A549 (cell line): ENCODE measurements at regions of chr12 and their contacts with region 1.

Region 1: DNA sequence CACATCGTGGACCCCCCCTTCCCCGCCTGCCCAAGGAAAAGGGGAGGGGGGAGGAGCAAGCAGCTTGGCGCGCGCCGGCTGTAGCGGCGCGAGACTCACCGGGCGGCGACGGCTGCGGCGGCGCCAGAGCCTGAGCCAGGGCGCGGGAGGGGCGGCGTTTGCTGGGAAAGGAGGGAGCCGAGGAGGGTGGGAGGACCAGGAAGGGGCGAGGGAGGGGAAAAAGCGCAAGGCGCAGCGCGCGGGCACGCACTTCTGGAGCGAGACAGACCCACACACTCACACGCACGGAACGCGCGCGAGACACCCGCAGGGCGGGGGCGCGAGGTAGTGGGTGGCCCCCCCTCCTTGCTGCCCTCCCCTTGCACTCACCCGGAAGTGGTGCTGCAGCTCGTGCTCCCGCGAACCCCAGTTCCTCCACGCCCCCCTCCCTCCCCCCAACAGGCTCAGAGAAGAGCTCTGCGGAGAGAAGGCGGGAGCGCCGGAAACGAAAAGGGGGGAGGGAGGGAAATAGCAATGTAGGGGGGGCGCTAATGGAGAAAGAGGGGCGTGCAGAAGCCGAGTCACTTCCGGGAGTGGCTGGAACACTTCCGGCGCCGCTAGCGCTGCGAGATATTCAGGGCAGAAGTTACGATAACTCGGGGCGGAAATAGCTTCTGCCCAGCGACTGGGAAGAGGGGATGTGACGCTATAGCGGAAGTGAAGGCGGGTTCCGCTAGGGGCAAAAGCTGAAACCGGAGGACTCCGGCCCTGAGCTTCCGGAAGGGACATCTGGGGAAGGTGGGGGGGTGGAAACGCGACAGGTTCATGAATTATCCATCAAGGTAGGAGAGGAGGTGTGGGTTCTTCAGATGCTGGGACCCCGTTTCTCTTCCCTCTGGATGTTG is at the start of gene ZNF384:
- DNase-seq: peak; percentile 100
- ATAC-seq: peak; percentile 91 to 92
- H3K4me3 ChIP-seq: peak within 1 kb of the TSS; percentile 94
- H3K27ac ChIP-seq: peak within 1 kb of the TSS; percentile 98 to 100
- H3K4me1 ChIP-seq: peaks cover 18% of the 10 kb centered on the region; the same call in 2 of the 3 replicates
- CTCF ChIP-seq: no peak
- EP300 ChIP-seq: no peak
- POLR2A ChIP-seq: peak; percentile 59
- RAD21 ChIP-seq: 0 out of 5 replicates have a peak, but pooled peaks of 1 of the 2 experiments have one; percentile 13
- polyA plus RNA-seq, gene ZNF384: 59.6 and 81.9 TPM in 2 replicates

Region 2: DNA sequence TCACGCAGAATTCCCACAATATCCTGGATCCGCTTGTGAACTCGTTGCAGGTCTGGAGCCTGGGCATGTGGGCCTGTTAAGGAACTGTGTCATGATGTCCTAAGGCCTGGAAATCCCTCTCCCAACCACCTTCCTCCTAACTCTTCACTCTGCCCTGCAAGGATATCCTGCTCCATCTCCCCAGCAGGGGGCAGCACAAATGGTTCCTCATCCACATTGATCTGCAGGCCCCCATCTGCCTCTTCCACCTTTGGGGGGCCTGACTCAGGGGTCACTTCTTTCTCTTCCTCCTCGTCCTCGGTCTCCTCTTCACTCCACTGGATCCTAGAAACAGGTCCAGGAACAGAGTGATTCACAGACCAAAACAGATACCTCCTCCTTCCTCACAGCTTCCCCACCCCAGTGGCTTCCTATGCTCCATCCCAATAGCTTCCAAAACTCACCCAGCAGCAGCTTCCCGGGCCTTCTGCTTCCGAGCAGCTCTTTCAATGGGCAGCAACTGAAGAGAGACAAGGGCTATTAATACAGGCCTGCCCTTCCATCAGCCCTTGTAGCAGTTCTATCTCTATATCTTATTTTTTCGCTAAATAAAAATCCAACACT is 125.7 kb before region 1 on chr12:
- CTCF ChIA-PET with region 1: interaction called, 4 read pairs
- POLR2A ChIA-PET with region 1: interaction called, 22 read pairs
- DNase-seq: peak; percentile 65 to 69
- ATAC-seq: peak; percentile 55 to 64; a peak in 4 of 6 replicates
- H3K4me3 ChIP-seq: no peak overlapping the region
- H3K27ac ChIP-seq: no peak overlapping the region
- H3K4me1 ChIP-seq: peaks cover 6% of the 10 kb centered on the region; the same call in 2 of the 3 replicates
- CTCF ChIP-seq: peak; percentile 80
- EP300 ChIP-seq: no peak
- POLR2A ChIP-seq: no peak
- RAD21 ChIP-seq: peak; percentile 20 to 33; a peak in 1 of 5 replicates

Region 3: DNA sequence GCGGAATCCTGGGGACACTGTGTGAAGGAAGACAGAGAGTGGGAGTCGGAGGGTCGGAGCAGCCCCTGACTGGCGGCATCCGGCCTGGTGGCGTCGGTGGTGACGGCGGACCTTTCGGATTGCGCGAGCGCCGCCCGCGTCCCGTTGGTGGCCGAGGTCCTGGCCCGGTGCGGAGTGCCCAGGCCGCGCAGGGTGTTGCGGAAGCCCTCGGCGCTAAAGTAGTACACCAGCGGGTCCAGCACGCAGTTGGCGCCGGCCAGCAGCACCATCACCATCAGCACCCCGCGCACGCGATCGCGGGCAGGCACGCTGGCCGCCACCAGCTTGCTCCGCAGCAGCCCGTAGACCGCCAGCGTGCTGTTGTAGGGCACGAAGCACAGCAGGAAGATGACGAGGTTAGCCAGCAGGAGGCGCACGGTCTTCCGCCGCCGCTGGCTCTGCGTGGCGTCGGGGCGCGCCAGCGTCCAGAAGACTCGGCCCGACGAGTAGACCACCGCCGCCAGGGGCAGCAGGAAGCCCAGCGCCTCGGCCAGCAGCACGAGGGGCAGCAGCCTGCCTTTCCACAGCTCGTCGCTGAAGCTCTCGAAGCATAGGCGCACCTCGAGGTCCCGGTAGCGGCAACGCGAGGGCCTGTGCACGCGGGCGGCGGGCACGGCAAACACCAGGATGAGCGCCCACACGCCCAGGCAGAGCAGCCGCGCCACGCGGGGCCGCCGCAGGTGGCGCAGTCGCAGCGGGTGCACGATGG is 68.9 kb before region 1 on chr12:
- CTCF ChIA-PET with region 1: interaction called, 10 read pairs
- POLR2A ChIA-PET with region 1: interaction called, 3 read pairs
- DNase-seq: no peak
- ATAC-seq: no peak
- H3K4me3 ChIP-seq: no peak overlapping the region
- H3K27ac ChIP-seq: no peak overlapping the region
- H3K4me1 ChIP-seq: no peaks in the 10 kb centered on the region
- CTCF ChIP-seq: no peak
- EP300 ChIP-seq: no peak
- POLR2A ChIP-seq: no peak
- RAD21 ChIP-seq: no peak

Region 4: DNA sequence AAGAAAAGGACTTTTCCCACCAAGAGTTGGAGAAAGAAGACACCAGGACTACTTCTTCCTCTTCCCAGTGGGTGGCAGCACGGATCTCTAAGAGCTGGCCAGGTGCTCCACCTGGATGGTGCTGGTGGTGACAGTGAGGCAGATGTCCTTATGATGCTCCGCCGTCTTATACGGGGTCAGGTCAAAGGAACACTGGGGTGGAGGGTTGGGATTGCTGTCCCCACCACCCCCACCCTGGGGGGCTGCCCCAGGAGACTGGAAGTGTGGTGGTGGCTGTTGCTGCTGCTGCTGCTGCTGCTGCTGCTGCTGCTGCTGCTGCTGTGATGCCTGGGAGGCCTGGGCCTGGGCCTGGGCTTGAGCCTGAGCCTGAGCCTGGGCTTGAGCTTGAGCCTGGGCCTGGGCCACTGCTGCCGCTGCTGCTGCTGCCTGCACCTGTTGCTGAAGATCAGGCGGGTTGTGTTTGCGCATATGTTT is 21.6 kb before region 1 on chr12:
- CTCF ChIA-PET with region 1: interaction called, 7 read pairs
- POLR2A ChIA-PET with region 1: interaction called, 12 read pairs
- DNase-seq: peak; percentile 30 to 58
- ATAC-seq: peak in 1 of 2 experiments; percentile 45; a peak in 1 of 6 replicates
- H3K4me3 ChIP-seq: no peak overlapping the region
- H3K27ac ChIP-seq: no peak overlapping the region
- H3K4me1 ChIP-seq: no peaks in the 10 kb centered on the region
- CTCF ChIP-seq: peak; percentile 36; the same call in 2 of the 3 replicates
- EP300 ChIP-seq: no peak
- POLR2A ChIP-seq: no peak
- RAD21 ChIP-seq: peak; percentile 33 to 46; a peak in 2 of 5 replicates

Region 5: DNA sequence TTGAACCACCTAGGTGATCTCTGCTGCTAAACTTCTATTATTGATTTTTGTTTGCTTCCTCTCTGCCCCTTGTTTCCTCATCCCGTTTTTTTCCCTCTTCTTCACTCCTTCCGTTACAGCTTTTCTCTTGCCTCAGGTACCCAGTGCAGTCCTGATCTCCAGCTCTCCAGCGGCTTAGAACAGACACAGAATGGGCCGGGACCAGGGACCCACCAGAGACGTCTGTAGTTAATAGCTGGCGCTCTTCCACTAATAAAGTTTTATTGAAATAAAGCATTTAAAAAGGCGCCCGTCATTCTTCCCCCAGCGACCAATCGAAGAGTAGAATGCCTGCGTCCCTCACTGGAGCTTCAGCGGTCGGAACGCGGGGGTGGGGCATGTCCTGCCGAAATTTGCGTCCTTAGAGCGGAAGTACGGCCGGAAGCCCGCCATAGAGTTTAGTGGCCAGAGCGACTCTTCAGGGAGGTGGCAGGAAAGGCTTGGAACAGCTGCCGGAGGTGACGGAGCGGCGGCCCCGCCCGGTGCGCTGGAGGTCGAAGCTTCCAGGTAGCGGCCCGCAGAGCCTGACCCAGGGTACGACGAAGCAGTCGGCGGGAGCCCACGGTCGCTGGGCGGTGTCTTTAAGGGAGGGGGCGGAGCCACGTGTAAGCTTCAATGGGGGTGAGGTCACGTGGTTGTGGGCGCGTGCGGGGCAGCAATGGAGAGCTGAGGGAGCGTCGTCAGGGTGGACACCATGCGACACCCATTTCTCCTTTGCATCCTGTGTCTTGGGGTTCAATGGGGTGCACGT is 34.6 kb after region 1 on chr12 and contains the start of gene COPS7A:
- CTCF ChIA-PET with region 1: interaction called, 12 read pairs
- POLR2A ChIA-PET with region 1: interaction called, 86 read pairs
- DNase-seq: peak; percentile 99
- ATAC-seq: peak; percentile 98
- H3K4me3 ChIP-seq: peak within 1 kb of the TSS; percentile 61
- H3K27ac ChIP-seq: peak within 1 kb of the TSS; percentile 86 to 89
- H3K4me1 ChIP-seq: peaks cover 13% of the 10 kb centered on the region
- CTCF ChIP-seq: no peak
- EP300 ChIP-seq: no peak
- POLR2A ChIP-seq: peak; percentile 92
- RAD21 ChIP-seq: no peak
- polyA plus RNA-seq, gene COPS7A: 78.8 and 95.0 TPM in 2 replicates

Region 6: GRCh38 chr12:6730169-6730568 is 40.9 kb after region 1 on chr12:
- CTCF ChIA-PET with region 1: interaction called, 12 read pairs
- POLR2A ChIA-PET with region 1: interaction called, 14 read pairs
- DNase-seq: no peak
- ATAC-seq: peak in 1 of 2 experiments; percentile 36; a peak in 2 of 6 replicates
- H3K4me3 ChIP-seq: no peak overlapping the region
- H3K27ac ChIP-seq: no peak overlapping the region
- H3K4me1 ChIP-seq: peaks cover 4% of the 10 kb centered on the region; the same call in 2 of the 3 replicates
- CTCF ChIP-seq: no peak
- EP300 ChIP-seq: no peak
- POLR2A ChIP-seq: no peak
- RAD21 ChIP-seq: no peak

Region 7: GRCh38 chr12:6764011-6764828 is 75.0 kb after region 1 on chr12:
- CTCF ChIA-PET with region 1: interaction called, 3 read pairs
- POLR2A ChIA-PET with region 1: interaction called, 18 read pairs
- DNase-seq: peak; percentile 100
- ATAC-seq: peak; percentile 69 to 87
- H3K4me3 ChIP-seq: peak overlapping the region; percentile 97
- H3K27ac ChIP-seq: peak overlapping the region; percentile 95 to 99
- H3K4me1 ChIP-seq: peaks cover 39% of the 10 kb centered on the region
- CTCF ChIP-seq: no peak
- EP300 ChIP-seq: no peak
- POLR2A ChIP-seq: peak; percentile 47
- RAD21 ChIP-seq: no peak